Activated CD4-positive, alpha-beta memory T cell treated with anti-CD3 and anti-CD28 coated beads, Interleukin-2, amount 10 ng/mL, durations not matched to agents 7 days and 5 days (primary cell): ENCODE measurements at regions of chrX and their contacts with region 1.

Region 1: GRCh38 chrX:24054182-24055042 is at the start of gene EIF2S3:
- DNase-seq: peak; percentile 86
- H3K4me3 Mint-ChIP-seq: no peak within 1 kb of the TSS
- H3K27ac Mint-ChIP-seq: peak within 1 kb of the TSS; percentile 97
- H3K4me1 Mint-ChIP-seq: peaks cover 11% of the 10 kb centered on the region
- H3K27me3 Mint-ChIP-seq: no peaks in the 10 kb centered on the region
- total RNA-seq, gene EIF2S3: 172 to 179 TPM

Region 2: GRCh38 chrX:23901805-23902204 is 152.6 kb before region 1 on chrX:
- CTCF ChIA-PET with region 1: interaction called, 72 read pairs
- POLR2A ChIA-PET with region 1: interaction called, 35 read pairs
- DNase-seq: peak; percentile 48
- H3K4me3 Mint-ChIP-seq: no peak overlapping the region
- H3K27ac Mint-ChIP-seq: no peak overlapping the region
- H3K4me1 Mint-ChIP-seq: peaks cover 26% of the 10 kb centered on the region
- H3K27me3 Mint-ChIP-seq: no peaks in the 10 kb centered on the region

Region 3: DNA sequence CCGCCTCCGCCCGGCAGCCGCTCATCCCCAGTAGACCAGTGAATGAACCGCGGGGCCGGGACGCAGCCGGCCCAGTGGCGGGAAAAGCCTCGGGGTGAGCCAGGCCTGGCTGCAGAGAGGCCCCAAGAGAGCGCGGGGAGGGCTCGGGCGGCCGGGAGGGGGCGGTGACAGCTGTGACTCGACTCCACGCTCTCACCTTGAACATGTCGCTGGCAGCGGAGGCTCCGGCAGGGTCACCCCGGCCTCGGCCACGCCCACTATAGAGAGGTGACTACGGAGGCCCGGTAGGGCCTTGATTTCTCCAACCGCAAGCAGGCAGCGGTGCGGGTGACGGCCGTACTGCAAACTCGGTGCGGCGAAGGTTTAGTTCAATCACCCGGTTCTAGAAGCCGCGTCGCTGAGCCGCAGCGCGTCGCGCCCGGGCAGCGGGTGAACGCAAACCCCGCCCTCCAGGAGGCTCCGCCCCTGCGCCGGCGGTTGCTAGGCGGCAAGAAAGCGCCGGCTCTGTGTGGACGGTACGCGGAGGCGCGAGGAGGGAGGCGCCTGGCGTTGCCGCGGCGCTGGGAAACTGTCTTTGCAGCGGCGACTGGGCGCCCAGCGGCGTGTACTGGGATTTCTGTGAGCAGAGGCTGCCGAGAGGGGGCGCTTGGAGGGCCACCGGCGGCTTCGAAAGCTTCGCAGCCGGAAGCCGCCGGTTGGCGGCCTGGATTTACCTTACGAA is 146.8 kb before region 1 on chrX and contains the starts of genes APOO and CXorf58:
- CTCF ChIA-PET with region 1: interaction called, 72 read pairs
- POLR2A ChIA-PET with region 1: interaction called, 35 read pairs
- DNase-seq: peak; percentile 93
- H3K4me3 Mint-ChIP-seq: peak within 1 kb of the TSS; percentile 77
- H3K27ac Mint-ChIP-seq: peak within 1 kb of the TSS; percentile 89
- H3K4me1 Mint-ChIP-seq: peaks cover 23% of the 10 kb centered on the region
- H3K27me3 Mint-ChIP-seq: no peaks in the 10 kb centered on the region
- total RNA-seq, gene APOO: 25.1 to 26.3 TPM
- total RNA-seq, gene CXorf58: not detected

Region 4: DNA sequence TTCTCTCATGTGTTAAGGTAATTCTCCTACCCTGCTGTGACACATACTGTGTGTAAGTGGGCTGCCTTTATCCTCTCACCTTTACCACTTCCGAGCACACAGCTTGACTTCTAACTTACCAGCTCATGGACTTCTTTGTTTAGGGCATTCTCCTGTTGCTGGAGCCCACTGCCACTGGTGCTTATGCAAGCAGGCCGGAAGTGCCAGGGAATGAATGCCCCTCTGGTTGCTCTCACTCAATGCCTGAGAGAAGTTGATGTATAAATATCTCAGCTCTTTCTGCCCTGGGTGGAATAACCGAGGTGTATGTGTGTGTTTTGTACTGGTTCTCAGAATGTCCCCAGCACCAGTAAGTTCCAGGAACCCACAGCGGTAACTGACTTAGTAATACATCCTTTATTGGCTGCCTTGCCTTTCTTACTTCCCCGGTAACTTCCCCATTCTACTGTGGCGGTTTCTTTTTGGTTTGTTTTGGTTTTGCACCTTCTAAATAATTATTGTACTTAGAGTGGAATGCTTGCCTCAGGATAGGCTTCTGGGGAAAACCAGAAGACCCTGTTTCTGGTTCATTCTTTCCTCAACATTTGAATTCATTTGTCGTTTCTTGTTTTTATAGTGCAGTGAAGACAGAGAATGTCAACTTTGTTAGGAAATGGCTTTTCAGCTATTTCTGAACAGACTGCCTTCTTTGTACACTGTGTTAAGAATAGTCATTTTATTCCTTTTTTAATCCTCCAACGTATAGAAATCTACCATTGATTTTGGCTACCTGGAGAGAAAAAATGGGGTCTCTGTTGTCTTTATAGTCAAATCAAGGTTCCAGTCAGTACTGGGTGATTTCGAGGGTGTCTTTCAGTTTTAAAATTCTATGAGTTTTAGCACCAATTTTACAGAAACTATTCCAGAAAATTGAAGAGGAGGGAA is 101.2 kb before region 1 on chrX:
- CTCF ChIA-PET with region 1: interaction called, 19 read pairs
- POLR2A ChIA-PET with region 1: interaction called, 16 read pairs
- DNase-seq: peak; percentile 56
- H3K4me3 Mint-ChIP-seq: peak overlapping the region; percentile 80
- H3K27ac Mint-ChIP-seq: peak overlapping the region; percentile 93
- H3K4me1 Mint-ChIP-seq: peaks cover 29% of the 10 kb centered on the region
- H3K27me3 Mint-ChIP-seq: no peaks in the 10 kb centered on the region

Region 5: DNA sequence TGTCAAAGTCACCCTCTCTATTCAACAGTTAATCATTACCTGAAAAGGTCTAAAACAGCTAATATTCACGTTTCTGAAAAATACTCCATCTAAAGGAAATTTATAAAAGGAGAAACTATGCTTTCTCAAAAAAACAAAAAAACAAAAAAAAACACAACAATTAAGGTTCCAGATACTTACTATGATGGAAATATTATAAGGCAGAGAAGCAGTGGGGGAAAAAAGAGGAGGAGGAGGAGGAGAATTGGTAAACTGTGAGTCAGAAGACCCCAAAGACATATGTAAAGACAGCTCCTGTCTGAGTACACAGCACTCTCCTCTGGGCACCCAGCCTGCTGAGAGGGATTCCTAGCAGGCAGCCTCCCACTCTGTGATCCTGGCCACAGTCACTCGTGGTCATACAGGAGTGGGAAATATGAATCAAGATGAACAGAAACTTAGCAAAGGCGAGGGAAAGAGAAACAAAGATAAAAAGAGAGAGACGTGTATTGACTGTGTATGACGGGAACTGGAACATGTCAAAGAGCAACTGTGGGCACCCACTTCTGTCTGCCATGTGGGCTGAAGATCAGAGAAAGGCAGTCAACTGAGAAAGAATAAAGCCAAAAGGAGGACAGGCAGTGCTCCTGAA is 39.9 kb before region 1 on chrX:
- CTCF ChIA-PET with region 1: interaction called, 5 read pairs
- POLR2A ChIA-PET with region 1: interaction called, 10 read pairs
- DNase-seq: peak; percentile 16
- H3K4me3 Mint-ChIP-seq: no peak overlapping the region
- H3K27ac Mint-ChIP-seq: peak overlapping the region; percentile 50
- H3K4me1 Mint-ChIP-seq: peaks cover 31% of the 10 kb centered on the region
- H3K27me3 Mint-ChIP-seq: no peaks in the 10 kb centered on the region

Region 6: GRCh38 chrX:24024819-24025740 is 29.3 kb before region 1 on chrX:
- CTCF ChIA-PET with region 1: interaction called, 70 read pairs
- POLR2A ChIA-PET with region 1: interaction called, 86 read pairs
- DNase-seq: peak; percentile 86
- H3K4me3 Mint-ChIP-seq: peak overlapping the region; percentile 88
- H3K27ac Mint-ChIP-seq: peak overlapping the region; percentile 87
- H3K4me1 Mint-ChIP-seq: peaks cover 27% of the 10 kb centered on the region
- H3K27me3 Mint-ChIP-seq: no peaks in the 10 kb centered on the region